Mammary epithelial cell (primary cell): ENCODE measurements at regions of chr4 and their contacts with region 1.

Region 1: DNA sequence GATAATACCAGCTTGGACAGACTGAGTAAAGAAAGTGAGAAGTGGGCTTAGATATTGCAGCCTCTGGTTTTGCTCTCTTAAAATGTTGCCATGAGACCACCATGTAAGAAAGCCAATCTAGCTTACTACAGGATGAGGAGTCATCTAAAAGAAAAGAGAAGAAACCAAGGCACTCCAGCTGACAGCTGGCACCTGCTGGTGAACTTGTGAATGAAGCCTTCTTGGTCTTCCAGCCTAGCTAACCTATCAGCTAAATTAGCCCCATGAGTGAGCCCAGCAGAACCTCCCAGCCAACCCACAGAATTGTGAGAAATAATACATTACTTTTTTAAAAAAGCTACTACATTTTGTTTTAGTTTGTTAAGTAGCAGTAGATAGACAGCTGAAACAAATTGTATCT is 154.5 kb upstream of the QRFPR start:
- DNase-seq: no peak
- H3K4me3 ChIP-seq: no peak overlapping the region
- H3K27ac ChIP-seq: no peak overlapping the region
- H3K4me1 ChIP-seq: no peaks in the 10 kb centered on the region
- H3K27me3 ChIP-seq: no peaks in the 10 kb centered on the region
- CTCF ChIP-seq: peak in 1 of 2 donors; percentile 11

Region 2: GRCh38 chr4:120977435-120977997 is 557.8 kb before region 1 on chr4:
- CTCF ChIA-PET with region 1: no interaction called
- dilution Hi-C with region 1: no loop called
- in situ Hi-C with region 1: no loop called
- intact Hi-C with region 1: no loop called
- DNase-seq: peak; percentile 47
- H3K4me3 ChIP-seq: no peak overlapping the region
- H3K27ac ChIP-seq: no peak overlapping the region
- H3K4me1 ChIP-seq: no peaks in the 10 kb centered on the region
- H3K27me3 ChIP-seq: no peaks in the 10 kb centered on the region
- CTCF ChIP-seq: peak; percentile 66 to 69

Region 3: GRCh38 chr4:121510341-121510874 is 24.9 kb before region 1 on chr4:
- CTCF ChIA-PET with region 1: no interaction called
- dilution Hi-C with region 1: no loop called
- in situ Hi-C with region 1: no loop called
- intact Hi-C with region 1: loop called (anchors 1 kb)
- DNase-seq: no peak
- H3K4me3 ChIP-seq: no peak overlapping the region
- H3K27ac ChIP-seq: no peak overlapping the region
- H3K4me1 ChIP-seq: no peaks in the 10 kb centered on the region
- H3K27me3 ChIP-seq: peaks cover 2% of the 10 kb centered on the region
- CTCF ChIP-seq: no peak